ENCODE measurements at regions of chr13 and their contacts with region 1.

Region 1: GRCh38 chr13:20495082-20496023 is 30.3 kb downstream of the CRYL1 start:
- DNase-seq: peak; percentile 25 to 79 (median 66)
- ATAC-seq: peak; percentile 98
- H3K4me3 ChIP-seq: no peak overlapping the region
- H3K4me3 Mint-ChIP-seq: no peak overlapping the region
- H3K27ac ChIP-seq: no peak overlapping the region
- H3K27ac Mint-ChIP-seq: no peak overlapping the region
- H3K4me1 ChIP-seq: no peaks in the 10 kb centered on the region
- H3K4me1 Mint-ChIP-seq: peaks cover 15% of the 10 kb centered on the region
- H3K27me3 ChIP-seq: no peaks in the 10 kb centered on the region
- H3K27me3 Mint-ChIP-seq: no peaks in the 10 kb centered on the region
- CTCF ChIP-seq: peak; percentile 99

Region 2: GRCh38 chr13:19940106-19940505 is 555.2 kb before region 1 on chr13:
- CTCF ChIA-PET with region 1: no interaction called
- POLR2A ChIA-PET with region 1: no interaction called
- intact Hi-C with region 1: no loop called
- DNase-seq: no peak
- ATAC-seq: no peak
- H3K4me3 ChIP-seq: no peak overlapping the region
- H3K4me3 Mint-ChIP-seq: no peak overlapping the region
- H3K27ac ChIP-seq: no peak overlapping the region
- H3K27ac Mint-ChIP-seq: no peak overlapping the region
- H3K4me1 ChIP-seq: no peaks in the 10 kb centered on the region
- H3K4me1 Mint-ChIP-seq: no peaks in the 10 kb centered on the region
- H3K27me3 ChIP-seq: peaks cover 0 to 3% of the 10 kb centered on the region in 2 experiments
- H3K27me3 Mint-ChIP-seq: peaks cover 14% of the 10 kb centered on the region
- CTCF ChIP-seq: no peak

Region 3: DNA sequence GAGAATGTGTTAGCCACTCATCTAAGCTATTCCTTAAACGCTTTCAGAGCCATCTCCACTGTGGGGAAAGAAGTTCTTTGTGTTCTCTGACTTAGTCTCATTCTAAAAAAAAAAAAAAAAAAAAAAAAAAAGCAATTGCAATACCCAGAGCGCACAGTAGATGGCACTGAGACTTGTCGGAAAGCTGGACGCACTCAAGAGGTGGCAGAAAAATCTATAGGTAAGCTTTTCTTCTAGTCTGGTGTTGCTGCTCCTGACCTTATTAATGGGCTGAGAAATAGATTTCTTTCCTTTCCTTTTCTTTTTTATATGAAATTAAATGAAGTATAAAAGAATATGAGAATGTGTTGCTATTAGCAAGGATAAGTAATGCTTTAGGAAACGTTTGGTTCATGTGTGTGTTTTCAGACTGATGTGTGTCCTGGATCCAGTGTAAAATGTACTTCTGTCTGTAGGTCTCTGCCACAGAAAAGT is 298.0 kb before region 1 on chr13:
- CTCF ChIA-PET with region 1: interaction called, 3 read pairs
- POLR2A ChIA-PET with region 1: no interaction called
- intact Hi-C with region 1: loop called in 1 of 2 experiments (anchors 5 kb)
- DNase-seq: peak in 4 of 9 experiments; percentile 24 to 71 (median 46)
- ATAC-seq: peak; percentile 76
- H3K4me3 ChIP-seq: no peak overlapping the region
- H3K4me3 Mint-ChIP-seq: no peak overlapping the region
- H3K27ac ChIP-seq: no peak overlapping the region
- H3K27ac Mint-ChIP-seq: no peak overlapping the region
- H3K4me1 ChIP-seq: peaks cover 16% of the 10 kb centered on the region
- H3K4me1 Mint-ChIP-seq: peaks cover 18% of the 10 kb centered on the region
- H3K27me3 ChIP-seq: peaks cover 21 to 38% of the 10 kb centered on the region in 2 experiments
- H3K27me3 Mint-ChIP-seq: peaks cover 42% of the 10 kb centered on the region
- CTCF ChIP-seq: peak; percentile 78

Region 4: DNA sequence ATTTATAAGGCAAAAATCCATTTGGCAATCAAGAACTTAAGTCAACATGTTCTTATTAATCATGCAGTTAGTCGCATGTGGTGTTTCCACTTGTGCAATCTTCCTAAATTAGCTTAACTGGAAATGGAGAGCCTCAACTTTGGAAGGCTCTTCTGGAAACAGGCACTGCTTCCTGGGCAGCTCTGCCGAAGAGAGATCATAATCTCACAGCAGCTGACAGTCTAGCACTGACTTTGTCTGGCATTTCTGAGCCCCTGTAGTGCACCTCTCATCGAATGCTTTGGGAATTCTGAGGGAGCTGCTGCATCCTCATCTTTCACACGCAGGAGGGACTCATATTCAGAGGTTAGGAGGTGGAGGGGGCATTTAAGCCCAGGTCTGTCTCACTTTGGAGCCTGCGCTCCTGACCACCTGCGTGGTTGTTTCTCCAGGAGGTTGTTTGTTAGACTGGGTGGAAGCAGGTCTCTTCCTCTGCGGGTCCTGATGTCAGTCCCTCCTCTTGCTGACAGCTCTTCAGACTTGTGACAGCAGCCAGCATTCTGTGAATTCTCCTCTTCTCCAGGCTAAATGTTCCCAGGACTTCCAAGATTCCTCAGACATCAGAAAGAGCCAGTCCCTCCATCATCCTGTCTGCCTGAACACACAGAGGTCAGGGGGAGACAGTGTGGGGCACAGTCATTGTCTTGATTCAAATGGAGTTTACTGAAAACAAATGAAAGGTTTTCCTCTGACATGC is 162.8 kb before region 1 on chr13:
- CTCF ChIA-PET with region 1: no interaction called
- POLR2A ChIA-PET with region 1: no interaction called
- intact Hi-C with region 1: no loop called
- DNase-seq: no peak
- ATAC-seq: no peak
- H3K4me3 ChIP-seq: no peak overlapping the region
- H3K4me3 Mint-ChIP-seq: no peak overlapping the region
- H3K27ac ChIP-seq: no peak overlapping the region
- H3K27ac Mint-ChIP-seq: no peak overlapping the region
- H3K4me1 ChIP-seq: no peaks in the 10 kb centered on the region
- H3K4me1 Mint-ChIP-seq: no peaks in the 10 kb centered on the region
- H3K27me3 ChIP-seq: no peaks in the 10 kb centered on the region
- H3K27me3 Mint-ChIP-seq: no peaks in the 10 kb centered on the region
- CTCF ChIP-seq: no peak

Region 5: DNA sequence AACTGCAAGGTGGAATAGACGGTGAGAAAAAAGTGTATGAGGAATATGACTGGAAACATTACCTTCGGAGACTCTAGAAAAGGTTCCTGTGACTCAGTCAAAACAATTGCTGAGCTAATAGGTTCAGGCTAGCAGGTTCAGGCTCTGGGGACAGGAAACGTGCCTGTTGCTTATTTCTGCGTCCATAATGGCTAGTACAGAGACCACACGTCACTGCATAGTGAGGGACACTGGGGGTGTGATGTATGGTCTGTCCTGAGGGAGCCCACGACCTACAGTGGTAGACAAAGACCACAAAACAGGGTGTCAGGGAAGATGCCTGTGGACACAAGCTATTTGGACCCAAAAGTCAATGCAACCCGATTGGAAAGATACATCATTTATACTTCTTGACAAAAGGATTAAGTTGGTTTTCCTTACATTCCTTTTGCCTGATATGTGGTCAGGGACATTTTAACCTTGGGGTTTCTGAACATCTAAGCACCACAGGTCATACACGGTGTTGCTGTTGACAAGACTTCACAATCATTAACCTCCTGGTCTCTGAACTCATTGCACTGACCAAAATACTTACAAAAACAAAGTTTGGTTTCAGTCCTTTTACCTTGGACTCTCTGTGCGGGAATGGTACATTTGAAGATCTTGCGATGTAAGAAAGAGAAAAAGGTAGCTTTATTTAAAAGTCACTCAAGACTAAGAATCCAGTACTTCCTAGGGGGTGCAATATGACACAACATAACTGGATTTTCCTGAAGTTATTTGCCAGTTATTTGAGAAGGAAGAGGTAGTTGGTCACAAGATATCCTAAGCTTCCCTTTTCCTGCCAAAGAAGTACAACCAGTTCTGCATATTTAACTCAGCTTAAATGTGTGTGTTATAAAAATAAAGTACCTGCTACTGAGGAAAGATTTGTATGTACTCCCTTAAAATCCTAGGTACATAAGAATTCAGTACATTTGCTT is 10.3 kb after region 1 on chr13:
- CTCF ChIA-PET with region 1: interaction called, 17 read pairs
- POLR2A ChIA-PET with region 1: no interaction called
- intact Hi-C with region 1: no loop called
- DNase-seq: no peak
- ATAC-seq: no peak
- H3K4me3 ChIP-seq: no peak overlapping the region
- H3K4me3 Mint-ChIP-seq: no peak overlapping the region
- H3K27ac ChIP-seq: no peak overlapping the region
- H3K27ac Mint-ChIP-seq: no peak overlapping the region
- H3K4me1 ChIP-seq: no peaks in the 10 kb centered on the region
- H3K4me1 Mint-ChIP-seq: no peaks in the 10 kb centered on the region
- H3K27me3 ChIP-seq: no peaks in the 10 kb centered on the region
- H3K27me3 Mint-ChIP-seq: no peaks in the 10 kb centered on the region
- CTCF ChIP-seq: no peak

Region 6: DNA sequence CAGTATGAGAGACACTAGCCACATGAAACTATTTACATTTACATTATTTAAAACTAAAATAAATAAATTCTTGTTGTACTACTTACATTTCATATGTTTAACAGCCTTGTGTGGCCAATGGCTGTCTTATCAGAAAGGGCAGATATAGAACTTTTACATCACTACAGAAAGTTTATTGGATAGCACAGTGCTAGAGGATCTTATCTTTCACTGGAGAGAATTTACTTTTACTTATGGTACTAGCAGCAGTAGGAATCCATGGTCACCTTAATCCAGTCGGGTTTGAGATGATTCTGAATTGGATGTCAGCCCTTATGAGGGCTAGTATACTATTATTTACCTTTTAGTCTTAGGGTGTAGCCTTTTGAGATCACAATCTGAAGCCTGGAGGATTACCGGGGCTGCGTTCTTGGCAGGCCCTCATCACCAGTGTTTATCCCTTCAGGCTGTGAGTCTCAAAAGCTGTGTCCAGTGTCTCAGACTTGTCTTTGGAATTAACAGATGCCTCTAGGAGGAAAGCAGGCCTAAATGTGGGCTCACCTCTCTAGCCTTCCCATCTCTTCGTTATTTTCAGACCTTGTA is 93.3 kb after region 1 on chr13:
- CTCF ChIA-PET with region 1: interaction called, 3 read pairs
- POLR2A ChIA-PET with region 1: no interaction called
- intact Hi-C with region 1: loop called (anchors 5 kb)
- DNase-seq: no peak
- ATAC-seq: no peak
- H3K4me3 ChIP-seq: no peak overlapping the region
- H3K4me3 Mint-ChIP-seq: no peak overlapping the region
- H3K27ac ChIP-seq: no peak overlapping the region
- H3K27ac Mint-ChIP-seq: no peak overlapping the region
- H3K4me1 ChIP-seq: no peaks in the 10 kb centered on the region
- H3K4me1 Mint-ChIP-seq: no peaks in the 10 kb centered on the region
- H3K27me3 ChIP-seq: no peaks in the 10 kb centered on the region
- H3K27me3 Mint-ChIP-seq: no peaks in the 10 kb centered on the region
- CTCF ChIP-seq: no peak

Region 7: DNA sequence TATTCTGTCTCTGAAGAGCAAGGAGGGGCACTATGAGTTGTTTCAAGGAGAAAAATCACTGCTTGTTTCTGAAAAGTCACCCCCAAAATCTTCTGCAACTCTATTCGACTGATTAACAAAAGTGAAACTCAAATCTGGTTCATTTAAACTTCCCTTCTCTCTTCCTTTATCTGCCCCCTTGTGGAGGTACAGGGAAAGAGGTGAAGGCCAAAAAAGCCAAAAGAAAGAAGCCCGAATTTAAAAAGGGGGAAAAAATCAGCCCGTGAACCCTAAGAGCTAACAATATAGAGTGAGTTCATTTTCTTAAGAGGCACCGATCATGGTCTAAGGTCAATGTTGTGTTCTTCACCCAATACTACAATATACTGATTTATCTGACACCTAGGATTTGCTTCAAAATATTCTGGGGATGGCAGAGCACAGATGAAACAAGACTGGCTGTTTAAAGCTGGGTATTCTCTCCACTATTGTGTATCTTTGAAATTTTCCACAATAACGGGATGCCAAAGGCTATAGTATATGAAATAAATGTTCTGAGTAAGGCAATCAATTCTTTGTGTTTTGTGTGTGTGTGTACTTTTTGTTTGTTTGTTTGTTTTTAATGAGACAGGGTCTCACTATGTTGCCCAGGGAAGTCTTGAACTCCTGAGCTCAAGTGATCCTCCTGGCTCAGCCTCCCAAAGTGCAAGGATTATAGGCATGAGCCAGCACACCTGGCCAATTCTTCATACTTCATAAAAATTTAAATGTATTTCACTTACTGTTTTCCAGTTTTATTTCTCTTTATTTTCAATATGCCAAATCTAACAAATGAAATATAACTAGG is 333.4 kb after region 1 on chr13:
- CTCF ChIA-PET with region 1: interaction called, 84 read pairs
- POLR2A ChIA-PET with region 1: no interaction called
- intact Hi-C with region 1: loop called (anchors 1 kb)
- DNase-seq: peak in 6 of 9 experiments; percentile 5 to 81 (median 36)
- ATAC-seq: peak; percentile 94
- H3K4me3 ChIP-seq: peak overlapping the region in 1 of 2 experiments; percentile 10
- H3K4me3 Mint-ChIP-seq: peak overlapping the region; percentile 44
- H3K27ac ChIP-seq: no peak overlapping the region
- H3K27ac Mint-ChIP-seq: peak overlapping the region; percentile 70
- H3K4me1 ChIP-seq: no peaks in the 10 kb centered on the region
- H3K4me1 Mint-ChIP-seq: peaks cover 7% of the 10 kb centered on the region
- H3K27me3 ChIP-seq: no peaks in the 10 kb centered on the region
- H3K27me3 Mint-ChIP-seq: no peaks in the 10 kb centered on the region
- CTCF ChIP-seq: peak; percentile 71

Region 8: DNA sequence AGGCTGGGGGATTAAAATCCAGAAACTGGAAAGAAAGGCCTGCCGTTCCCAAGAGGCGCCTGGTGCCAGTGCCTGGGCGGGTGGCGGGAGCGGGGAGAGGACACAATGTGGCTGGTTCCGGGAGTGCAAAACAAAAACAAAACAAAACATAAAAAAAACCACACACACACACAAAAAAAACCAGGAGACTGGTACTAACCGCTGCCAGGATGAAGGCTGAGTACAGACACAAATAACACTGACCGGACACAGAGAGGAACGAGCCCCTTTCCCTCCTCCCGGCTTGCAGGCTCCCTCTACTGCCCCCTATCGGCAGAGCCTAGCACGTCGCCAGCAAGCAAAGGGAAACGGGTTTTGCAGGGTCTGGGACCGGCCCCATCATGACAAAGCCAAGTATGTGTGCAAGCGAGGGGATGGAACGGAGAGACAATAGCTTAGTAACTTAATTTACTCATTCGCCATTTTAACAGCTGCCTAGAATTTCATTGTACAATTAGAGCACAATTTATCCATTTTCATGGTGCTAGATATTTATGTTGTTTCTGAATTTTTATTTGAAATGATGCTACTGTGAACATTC is 981.6 kb after region 1 on chr13:
- CTCF ChIA-PET with region 1: no interaction called
- POLR2A ChIA-PET with region 1: no interaction called
- intact Hi-C with region 1: loop called in 1 of 2 experiments (anchors 5 kb)
- DNase-seq: peak; percentile 55 to 87 (median 80)
- ATAC-seq: peak; percentile 87
- H3K4me3 ChIP-seq: peak overlapping the region; percentile 24 to 40
- H3K4me3 Mint-ChIP-seq: peak overlapping the region; percentile 81
- H3K27ac ChIP-seq: no peak overlapping the region
- H3K27ac Mint-ChIP-seq: no peak overlapping the region
- H3K4me1 ChIP-seq: peaks cover 11% of the 10 kb centered on the region
- H3K4me1 Mint-ChIP-seq: peaks cover 19% of the 10 kb centered on the region
- H3K27me3 ChIP-seq: no peaks in the 10 kb centered on the region
- H3K27me3 Mint-ChIP-seq: peaks cover 2% of the 10 kb centered on the region
- CTCF ChIP-seq: peak; percentile 96

Measured in CD8-positive, alpha-beta T cell (primary cell).